A549 (cell line): ENCODE measurements at regions of chr11 and their contacts with region 1.

Region 1: GRCh38 chr11:25981998-25982397 is 349.9 kb upstream of the ANO3 start:
- DNase-seq: peak; percentile 4 to 57
- ATAC-seq: peak; percentile 88 to 90
- H3K4me3 ChIP-seq: no peak overlapping the region
- H3K27ac ChIP-seq: no peak overlapping the region
- H3K4me1 ChIP-seq: no peaks in the 10 kb centered on the region
- CTCF ChIP-seq: peak; percentile 69
- EP300 ChIP-seq: no peak
- POLR2A ChIP-seq: no peak
- RAD21 ChIP-seq: peak; percentile 75 to 76

Region 2: DNA sequence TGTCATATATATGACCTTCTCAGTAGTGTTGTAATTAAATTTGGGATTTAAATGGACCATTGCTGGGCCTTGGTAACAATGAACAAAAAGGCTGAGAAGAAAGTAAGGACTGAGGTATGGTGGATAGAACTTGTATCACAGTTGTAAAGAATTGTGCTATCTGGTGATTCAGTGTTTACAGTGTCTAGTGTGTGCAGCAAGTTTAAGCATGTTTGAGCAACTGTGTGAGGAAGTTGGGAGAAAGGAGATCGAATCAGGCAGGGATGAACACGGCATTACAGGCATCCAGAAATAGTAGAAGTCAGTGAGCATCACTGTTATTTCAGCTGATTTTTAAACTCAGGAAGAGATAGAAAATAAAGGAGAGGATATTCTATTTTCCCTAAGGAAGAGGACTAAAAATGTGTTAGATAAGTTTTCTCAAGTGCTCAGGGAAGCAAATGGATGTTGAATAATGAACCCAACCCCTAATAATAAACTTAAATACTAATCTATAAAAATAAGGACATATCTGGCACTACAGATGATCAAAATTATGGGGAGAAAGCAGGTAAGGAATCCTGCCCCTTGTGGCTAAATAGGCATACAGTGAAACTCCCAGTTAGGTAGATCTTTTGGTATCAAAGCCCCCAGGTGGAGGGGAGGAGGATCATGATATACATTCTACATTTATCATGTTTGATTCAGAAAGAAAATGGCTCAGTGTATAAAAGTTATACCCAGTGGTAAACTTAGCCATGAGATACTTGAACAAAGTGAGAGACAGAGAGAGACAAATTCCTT is 11.1 kb before region 1 on chr11:
- CTCF ChIA-PET with region 1: interaction called, 11 read pairs
- POLR2A ChIA-PET with region 1: no interaction called
- DNase-seq: peak in 1 of 2 experiments; percentile 1
- ATAC-seq: no peak
- H3K4me3 ChIP-seq: no peak overlapping the region
- H3K27ac ChIP-seq: no peak overlapping the region
- H3K4me1 ChIP-seq: no peaks in the 10 kb centered on the region
- CTCF ChIP-seq: 0 out of 3 replicates have a peak, but pooled peaks have one; percentile 11
- EP300 ChIP-seq: no peak
- POLR2A ChIP-seq: no peak
- RAD21 ChIP-seq: no peak

Region 3: GRCh38 chr11:26227296-26227695 is 245.3 kb after region 1 on chr11:
- CTCF ChIA-PET with region 1: interaction called, 12 read pairs
- POLR2A ChIA-PET with region 1: no interaction called
- DNase-seq: peak; percentile 2 to 43
- ATAC-seq: peak; percentile 66 to 77; a peak in 5 of 6 replicates
- H3K4me3 ChIP-seq: no peak overlapping the region
- H3K27ac ChIP-seq: peak overlapping the region; percentile 39 to 64; a peak in 3 of 6 replicates
- H3K4me1 ChIP-seq: peaks cover 26% of the 10 kb centered on the region
- CTCF ChIP-seq: peak; percentile 61
- EP300 ChIP-seq: no peak
- POLR2A ChIP-seq: no peak
- RAD21 ChIP-seq: peak; percentile 66 to 80